ENCODE measurements at regions of chr12 and their contacts with region 1.

Region 1: GRCh38 chr12:79415746-79416435 is 274.9 kb downstream of the PAWR start:
- DNase-seq: no peak
- H3K4me3 ChIP-seq: no peak overlapping the region
- H3K27ac ChIP-seq: no peak overlapping the region
- H3K4me1 ChIP-seq: peaks cover 0 to 8% of the 10 kb centered on the region in 2 donors
- H3K27me3 ChIP-seq: no peaks in the 10 kb centered on the region
- CTCF ChIP-seq: no peak
- POLR2A ChIP-seq: no peak

Region 2: DNA sequence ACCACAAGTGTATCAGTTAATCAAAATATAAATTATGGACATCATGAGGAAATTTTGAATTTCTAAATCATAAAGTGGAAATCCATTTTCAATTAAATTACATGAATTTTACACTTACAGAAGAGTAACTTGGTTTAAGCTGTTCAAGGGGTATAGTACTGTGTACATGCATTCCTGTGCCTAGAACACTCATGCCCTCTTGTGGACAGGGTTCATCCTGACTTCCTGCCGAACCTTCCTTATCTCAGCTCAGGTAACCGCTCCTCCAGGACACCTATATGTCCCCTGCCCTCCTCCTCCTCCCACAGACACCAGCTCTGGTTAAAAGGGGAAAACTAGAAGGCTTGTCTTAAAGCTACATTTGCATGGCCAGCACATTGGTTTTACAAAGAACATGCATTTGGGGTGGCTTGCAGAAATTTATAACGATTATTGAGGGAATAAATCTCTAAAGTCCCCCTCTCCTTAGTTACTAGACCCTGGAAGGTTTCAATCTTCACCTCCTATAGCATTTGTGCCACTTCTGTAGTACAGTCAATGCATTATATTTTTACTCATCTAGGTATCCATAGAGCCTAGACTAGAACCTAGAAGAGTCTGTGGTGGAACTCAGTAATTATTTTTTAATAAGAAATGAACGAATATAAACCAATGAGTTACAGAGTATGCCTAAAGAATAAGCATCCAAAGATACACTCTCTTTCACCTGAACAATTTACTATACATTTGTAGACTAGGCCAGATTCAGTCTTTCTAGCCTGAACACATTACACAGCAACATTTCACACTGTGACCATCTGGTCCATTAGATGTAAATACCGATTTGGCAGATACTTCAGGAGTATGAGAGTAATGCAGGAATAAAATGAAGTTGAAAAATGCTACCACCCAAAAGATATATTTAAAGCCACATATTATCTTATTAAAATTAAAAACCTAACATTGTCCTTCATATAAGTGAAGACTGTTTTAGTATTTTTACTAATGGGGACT is 70.7 kb before region 1 on chr12:
- intact Hi-C with region 1: no loop called
- DNase-seq: peak in 4 of 7 donors; percentile 10 to 23 (median 14)
- H3K4me3 ChIP-seq: no peak overlapping the region
- H3K27ac ChIP-seq: no peak overlapping the region
- H3K4me1 ChIP-seq: no peaks in the 10 kb centered on the region
- H3K27me3 ChIP-seq: no peaks in the 10 kb centered on the region
- CTCF ChIP-seq: peak in 5 of 6 experiments; percentile 14 to 34 (median 27)
- POLR2A ChIP-seq: no peak

Region 3: DNA sequence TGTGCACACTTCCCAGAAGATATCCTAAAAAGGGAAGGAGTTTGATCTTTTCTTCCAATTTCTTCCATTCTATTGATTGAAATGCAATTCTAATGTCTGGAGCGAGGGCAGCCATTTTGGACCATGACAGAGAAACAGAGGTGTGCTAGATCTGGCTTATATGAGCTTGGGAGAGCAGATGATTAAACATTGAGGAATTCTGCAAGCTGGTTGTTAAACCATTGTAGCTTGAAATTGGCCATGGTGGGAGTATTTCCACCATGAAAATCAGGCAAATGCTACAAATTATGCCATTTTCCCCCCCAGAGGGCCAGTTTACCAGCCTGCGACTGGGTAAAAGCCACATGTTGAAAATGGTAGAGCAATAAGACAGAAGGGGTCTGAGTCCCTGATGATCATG is 119.9 kb after region 1 on chr12:
- intact Hi-C with region 1: loop called in 1 of 2 experiments (anchors 5 kb)
- DNase-seq: no peak
- H3K4me3 ChIP-seq: no peak overlapping the region
- H3K27ac ChIP-seq: no peak overlapping the region
- H3K4me1 ChIP-seq: peaks cover 0 to 9% of the 10 kb centered on the region in 2 donors
- H3K27me3 ChIP-seq: no peaks in the 10 kb centered on the region
- CTCF ChIP-seq: no peak
- POLR2A ChIP-seq: no peak

Measured in adrenal gland (tissue), 19 donors.